RWPE1 (cell line): ENCODE measurements at regions of chr5 and their contacts with region 1.

Region 1: DNA sequence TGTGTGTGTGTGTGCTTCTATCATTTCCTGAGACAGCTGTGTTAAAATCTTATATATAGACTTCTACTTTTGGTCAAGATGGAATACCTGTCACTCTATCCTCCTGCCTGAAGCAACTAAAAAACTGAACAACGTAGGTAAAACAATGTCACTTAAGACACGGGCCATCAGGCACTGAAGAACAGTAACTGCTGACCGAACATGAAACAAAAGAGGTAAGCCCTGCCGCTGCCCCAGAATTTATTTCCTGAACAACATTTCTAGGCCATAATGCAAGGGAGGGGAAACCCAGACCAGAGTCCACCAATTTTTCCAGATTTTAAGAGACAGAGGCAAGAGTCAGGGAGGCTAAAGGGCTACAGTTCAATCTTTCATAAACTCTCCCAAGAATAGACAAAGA is 156.0 kb downstream of the CDC42SE2 start:
- DNase-seq: no peak
- H3K27ac ChIP-seq: no peak overlapping the region
- CTCF ChIP-seq: no peak

Region 2: DNA sequence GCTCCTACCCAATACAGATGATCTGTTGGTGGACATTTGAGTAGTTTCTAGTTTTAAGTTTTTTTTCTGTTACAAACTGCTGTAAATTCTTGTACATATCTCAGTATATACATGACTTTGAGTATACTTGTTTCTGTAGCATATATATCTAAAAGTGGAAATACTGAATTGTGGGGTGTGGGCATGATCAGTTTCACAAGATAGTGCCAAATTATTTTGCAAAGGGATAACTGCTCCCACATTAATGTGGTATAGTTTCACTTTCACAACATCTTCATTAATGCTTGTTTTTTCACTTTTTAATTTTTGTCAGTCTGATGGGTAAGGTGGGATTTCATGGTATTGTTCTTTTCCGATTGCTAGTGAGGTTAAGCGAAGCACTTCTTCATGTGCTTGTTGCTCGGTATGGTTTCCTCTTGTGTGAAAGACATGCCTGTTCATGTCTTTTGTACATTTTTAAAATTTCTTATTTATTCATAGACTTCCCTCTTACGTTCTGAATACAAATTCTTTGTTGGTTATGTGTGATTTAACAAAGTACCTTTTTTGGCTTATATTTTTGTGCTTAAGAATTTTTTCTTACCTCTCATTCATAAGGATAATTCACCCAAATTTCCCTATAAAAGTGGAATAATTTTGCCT is 52.5 kb before region 1 on chr5:
- CTCF ChIA-PET with region 1: interaction called, 3 read pairs
- POLR2A ChIA-PET with region 1: interaction called, 16 read pairs
- DNase-seq: no peak
- H3K27ac ChIP-seq: peak overlapping the region; percentile 39; the same call in 1 of the 2 replicates
- CTCF ChIP-seq: no peak